OCI-LY7 (cell line): ENCODE measurements at regions of chr6 and their contacts with region 1.

Region 1: DNA sequence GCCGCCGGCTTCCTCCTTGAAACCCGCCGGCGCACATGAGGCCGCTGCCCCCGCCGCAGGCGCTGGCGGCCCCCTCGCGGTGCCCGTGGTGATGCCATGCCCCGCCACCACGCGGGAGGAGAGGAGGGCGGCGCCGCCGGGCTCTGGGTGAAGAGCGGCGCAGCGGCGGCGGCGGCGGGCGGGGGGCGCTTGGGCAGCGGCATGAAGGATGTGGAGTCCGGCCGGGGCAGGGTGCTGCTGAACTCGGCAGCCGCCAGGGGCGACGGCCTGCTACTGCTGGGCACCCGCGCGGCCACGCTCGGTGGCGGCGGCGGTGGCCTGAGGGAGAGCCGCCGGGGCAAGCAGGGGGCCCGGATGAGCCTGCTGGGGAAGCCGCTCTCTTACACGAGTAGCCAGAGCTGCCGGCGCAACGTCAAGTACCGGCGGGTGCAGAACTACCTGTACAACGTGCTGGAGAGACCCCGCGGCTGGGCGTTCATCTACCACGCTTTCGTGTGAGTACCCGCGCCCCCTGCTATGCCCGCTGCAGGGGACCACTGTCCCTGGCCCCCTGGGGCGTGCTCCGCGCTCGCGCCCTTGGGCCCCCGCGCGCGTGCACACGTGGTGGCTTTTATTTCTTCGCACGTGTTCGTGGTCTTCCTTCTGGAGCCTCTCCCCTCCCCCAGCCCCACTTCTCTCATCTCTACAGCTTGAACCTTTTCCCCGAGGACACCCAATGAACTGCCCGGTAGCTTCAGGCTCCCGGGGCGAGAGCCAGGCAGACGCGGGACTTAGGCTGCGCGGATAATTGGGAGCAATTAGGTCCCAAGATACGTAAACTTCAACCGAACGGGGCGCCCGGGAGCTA is 453 bp downstream of the KCNQ5 start:
- DNase-seq: peak; percentile 86
- H3K4me3 ChIP-seq: peak overlapping the region; percentile 92
- H3K27ac ChIP-seq: peak overlapping the region; percentile 96
- H3K4me1 ChIP-seq: peaks cover 43% of the 10 kb centered on the region
- CTCF ChIP-seq: peak; percentile 48; the same call in 1 of the 2 replicates

Region 2: GRCh38 chr6:71288228-71289001 is 1333.9 kb before region 1 on chr6 and contains the start of gene OGFRL1:
- CTCF ChIA-PET with region 1: no interaction called
- POLR2A ChIA-PET with region 1: no interaction called
- intact Hi-C with region 1: loop called (anchors 5 kb)
- DNase-seq: peak; percentile 92
- H3K4me3 ChIP-seq: peak within 1 kb of the TSS; percentile 82
- H3K27ac ChIP-seq: peak within 1 kb of the TSS; percentile 96
- H3K4me1 ChIP-seq: peaks cover 44% of the 10 kb centered on the region
- CTCF ChIP-seq: 0 out of 2 replicates have a peak, but pooled peaks have one; percentile 27
- total RNA-seq, gene OGFRL1: 32.5 and 33.5 TPM in 2 replicates

Region 3: DNA sequence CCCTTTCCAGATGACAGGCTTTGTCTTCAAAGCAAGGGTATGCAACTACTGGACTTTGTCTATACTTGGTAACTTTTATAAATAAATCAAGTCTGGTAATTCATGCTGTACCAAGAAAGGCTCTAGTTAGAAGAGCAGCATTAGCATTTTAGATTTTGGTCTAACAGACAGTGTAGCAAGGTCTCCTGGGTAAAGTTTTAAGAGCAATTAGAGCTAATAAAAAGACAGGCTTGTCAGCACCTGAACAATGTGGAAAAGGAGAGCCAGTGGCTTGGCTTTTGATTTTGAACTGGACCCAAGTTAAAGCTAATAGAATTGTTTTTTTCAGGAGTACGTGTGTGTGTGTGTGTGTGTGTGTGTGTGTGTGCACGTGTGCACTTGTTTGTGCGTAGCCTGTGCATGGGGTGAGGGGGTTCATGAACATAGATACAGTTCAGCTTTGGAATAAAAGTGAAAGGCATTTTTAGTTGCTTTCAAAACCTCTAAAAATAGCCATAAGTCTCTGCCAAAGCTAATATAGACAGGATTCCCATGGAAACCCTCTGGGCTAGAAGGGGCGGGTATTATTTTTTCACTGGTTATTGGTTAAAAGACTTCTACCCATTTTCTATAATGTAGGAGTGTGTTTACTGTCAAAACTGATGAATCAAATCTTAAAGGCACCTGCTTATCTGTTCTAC is 137.9 kb after region 1 on chr6:
- CTCF ChIA-PET with region 1: no interaction called
- POLR2A ChIA-PET with region 1: no interaction called
- intact Hi-C with region 1: loop called (anchors 5 kb)
- DNase-seq: no peak
- H3K4me3 ChIP-seq: no peak overlapping the region
- H3K27ac ChIP-seq: no peak overlapping the region
- H3K4me1 ChIP-seq: no peaks in the 10 kb centered on the region
- CTCF ChIP-seq: no peak

Region 4: GRCh38 chr6:73262671-73263569 is 640.6 kb after region 1 on chr6 and contains the start of gene KHDC1:
- CTCF ChIA-PET with region 1: no interaction called
- POLR2A ChIA-PET with region 1: interaction called, 8 read pairs
- intact Hi-C with region 1: loop called (anchors 5 kb)
- DNase-seq: peak; percentile 86
- H3K4me3 ChIP-seq: peak within 1 kb of the TSS; percentile 87
- H3K27ac ChIP-seq: peak within 1 kb of the TSS; percentile 59
- H3K4me1 ChIP-seq: peaks cover 23% of the 10 kb centered on the region
- CTCF ChIP-seq: 0 out of 2 replicates have a peak, but pooled peaks have one; percentile 4
- total RNA-seq, gene KHDC1: 13.4 and 16.2 TPM in 2 replicates

Region 5: GRCh38 chr6:73329201-73329600 is 706.9 kb after region 1 on chr6:
- CTCF ChIA-PET with region 1: no interaction called
- POLR2A ChIA-PET with region 1: no interaction called
- intact Hi-C with region 1: loop called (anchors 5 kb)
- DNase-seq: no peak
- H3K4me3 ChIP-seq: no peak overlapping the region
- H3K27ac ChIP-seq: no peak overlapping the region
- H3K4me1 ChIP-seq: peaks cover 5% of the 10 kb centered on the region
- CTCF ChIP-seq: no peak

Region 6: GRCh38 chr6:73520688-73521350 is 898.5 kb after region 1 on chr6 and contains the start of gene EEF1A1:
- CTCF ChIA-PET with region 1: no interaction called
- POLR2A ChIA-PET with region 1: interaction called, 6 read pairs
- intact Hi-C with region 1: loop called (anchors 5 kb)
- DNase-seq: peak; percentile 99
- H3K4me3 ChIP-seq: peak within 1 kb of the TSS; percentile 99
- H3K27ac ChIP-seq: peak within 1 kb of the TSS; percentile 97
- H3K4me1 ChIP-seq: peaks cover 33% of the 10 kb centered on the region
- CTCF ChIP-seq: no peak
- total RNA-seq, gene EEF1A1: 8,152 and 8,173 TPM in 2 replicates